Right cardiac atrium (tissue), 5 donors: ENCODE measurements at regions of chr3 and their contacts with region 1.

Region 1: DNA sequence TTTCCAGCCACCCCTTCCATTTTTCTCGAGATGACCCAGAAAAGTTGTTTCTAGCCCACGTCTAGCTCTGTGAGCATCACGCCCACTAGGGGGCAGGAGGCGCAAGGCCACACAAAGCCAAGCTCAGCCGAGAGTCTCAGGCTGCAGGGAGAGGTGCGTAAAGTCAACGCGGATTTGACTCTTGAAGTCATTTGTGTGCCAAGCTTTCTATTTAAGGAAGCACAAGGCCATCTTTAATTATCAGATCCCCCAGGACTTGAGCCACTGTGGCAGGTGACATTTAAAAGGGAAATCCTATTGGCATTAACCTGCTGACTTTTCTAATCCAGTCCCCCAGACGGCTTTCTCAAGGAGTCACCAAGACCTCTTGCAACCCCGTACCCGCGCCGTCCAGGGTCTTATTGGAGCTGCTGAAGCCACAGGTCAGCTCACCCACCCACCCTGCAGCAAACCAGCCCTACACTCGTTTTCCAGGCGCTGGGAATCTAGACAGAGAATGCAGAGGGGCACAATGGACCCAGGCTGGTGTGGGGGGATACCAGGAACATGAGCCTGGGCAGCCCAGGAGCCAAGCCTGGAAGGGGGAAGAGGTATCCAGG is 62.1 kb downstream of the CAPN7 start:
- DNase-seq: peak; percentile 89 to 97 (median 93)
- ATAC-seq: peak; percentile 78 to 81
- H3K4me3 ChIP-seq: no peak overlapping the region
- H3K27ac ChIP-seq: no peak overlapping the region
- H3K4me1 ChIP-seq: peaks cover 11% of the 10 kb centered on the region
- H3K27me3 ChIP-seq: no peaks in the 10 kb centered on the region

Region 2: GRCh38 chr3:15332405-15333098 is 64.4 kb after region 1 on chr3 and contains the start of gene SH3BP5:
- intact Hi-C with region 1: loop called (anchors 5 to 10 kb)
- DNase-seq: peak; percentile 80 to 93 (median 91)
- ATAC-seq: peak; percentile 88 to 93
- H3K4me3 ChIP-seq: peak within 1 kb of the TSS; percentile 77
- H3K27ac ChIP-seq: peak within 1 kb of the TSS; percentile 24
- H3K4me1 ChIP-seq: peaks cover under 1% of the 10 kb centered on the region
- H3K27me3 ChIP-seq: no peaks in the 10 kb centered on the region
- total RNA-seq, gene SH3BP5: 13.6 to 26.6 (median 15.7) TPM

Region 3: GRCh38 chr3:15377961-15378791 is 110.0 kb after region 1 on chr3:
- intact Hi-C with region 1: loop called (anchors 2 to 5 kb)
- DNase-seq: peak; percentile 95 to 98 (median 96)
- ATAC-seq: peak; percentile 96
- H3K4me3 ChIP-seq: peak overlapping the region; percentile 4
- H3K27ac ChIP-seq: peak overlapping the region; percentile 79
- H3K4me1 ChIP-seq: peaks cover 4% of the 10 kb centered on the region
- H3K27me3 ChIP-seq: no peaks in the 10 kb centered on the region

Region 4: GRCh38 chr3:15384510-15385237 is 116.5 kb after region 1 on chr3:
- intact Hi-C with region 1: loop called (anchors 2 to 5 kb)
- DNase-seq: no peak
- ATAC-seq: no peak
- H3K4me3 ChIP-seq: no peak overlapping the region
- H3K27ac ChIP-seq: no peak overlapping the region
- H3K4me1 ChIP-seq: peaks cover 2% of the 10 kb centered on the region
- H3K27me3 ChIP-seq: no peaks in the 10 kb centered on the region

Region 5: DNA sequence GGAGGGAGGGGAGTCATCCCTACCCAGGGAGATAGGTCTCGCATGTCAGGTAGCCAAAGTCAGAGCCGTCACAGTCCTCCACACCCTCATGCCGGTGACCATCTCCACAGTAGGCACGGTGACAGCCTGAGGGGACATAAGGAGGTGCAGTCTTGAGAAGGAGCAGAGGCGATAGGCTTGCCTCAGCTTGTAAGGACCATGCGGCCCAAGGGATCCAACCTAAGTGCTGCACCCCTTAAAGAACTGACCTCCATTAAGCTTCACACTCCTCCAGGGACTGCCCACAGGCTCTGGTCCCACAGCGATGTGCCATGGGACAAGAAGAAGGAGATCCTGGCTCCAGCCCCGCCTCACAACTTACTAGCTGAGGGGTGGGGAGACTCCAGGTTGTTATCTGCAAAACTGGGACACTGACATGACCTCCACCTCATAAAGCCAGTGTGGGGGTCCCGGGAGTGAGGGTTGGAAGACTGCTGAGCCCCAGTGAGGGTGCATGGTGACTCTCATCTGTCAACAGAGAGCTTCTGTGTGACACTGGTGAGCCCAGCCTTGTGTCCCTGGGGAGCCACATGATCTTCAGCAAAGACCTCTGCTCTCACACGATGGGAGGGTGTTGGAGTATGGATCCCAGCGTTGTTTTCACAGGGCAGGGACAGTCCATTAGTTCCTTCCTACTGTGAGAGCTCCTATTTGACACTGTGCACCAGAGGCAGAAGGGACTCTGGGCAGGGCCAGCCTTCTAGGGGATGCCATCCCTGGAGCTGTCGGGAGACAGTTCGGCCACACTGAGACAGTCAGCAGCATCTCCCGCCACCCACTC is 185.9 kb after region 1 on chr3:
- intact Hi-C with region 1: no loop called
- DNase-seq: no peak
- ATAC-seq: no peak
- H3K4me3 ChIP-seq: no peak overlapping the region
- H3K27ac ChIP-seq: no peak overlapping the region
- H3K4me1 ChIP-seq: no peaks in the 10 kb centered on the region
- H3K27me3 ChIP-seq: no peaks in the 10 kb centered on the region